ENCODE measurements at regions of chr20 and their contacts with region 1.

Region 1: GRCh38 chr20:38926142-38926933 is at the start of gene FAM83D:
- DNase-seq: peak; percentile 99
- H3K4me3 Mint-ChIP-seq: peak within 1 kb of the TSS; percentile 79
- H3K27ac Mint-ChIP-seq: peak within 1 kb of the TSS; percentile 77
- H3K4me1 Mint-ChIP-seq: peaks cover 32% of the 10 kb centered on the region
- H3K27me3 Mint-ChIP-seq: no peaks in the 10 kb centered on the region
- total RNA-seq, gene FAM83D: 12.9 and 13.7 TPM in 2 replicates

Region 2: GRCh38 chr20:38997622-38998021 is 71.3 kb after region 1 on chr20:
- intact Hi-C with region 1: loop called (anchors 5 kb)
- DNase-seq: peak; percentile 77
- H3K4me3 Mint-ChIP-seq: peak overlapping the region; percentile 17
- H3K27ac Mint-ChIP-seq: peak overlapping the region; percentile 77
- H3K4me1 Mint-ChIP-seq: peaks cover 30% of the 10 kb centered on the region
- H3K27me3 Mint-ChIP-seq: no peaks in the 10 kb centered on the region

Region 3: DNA sequence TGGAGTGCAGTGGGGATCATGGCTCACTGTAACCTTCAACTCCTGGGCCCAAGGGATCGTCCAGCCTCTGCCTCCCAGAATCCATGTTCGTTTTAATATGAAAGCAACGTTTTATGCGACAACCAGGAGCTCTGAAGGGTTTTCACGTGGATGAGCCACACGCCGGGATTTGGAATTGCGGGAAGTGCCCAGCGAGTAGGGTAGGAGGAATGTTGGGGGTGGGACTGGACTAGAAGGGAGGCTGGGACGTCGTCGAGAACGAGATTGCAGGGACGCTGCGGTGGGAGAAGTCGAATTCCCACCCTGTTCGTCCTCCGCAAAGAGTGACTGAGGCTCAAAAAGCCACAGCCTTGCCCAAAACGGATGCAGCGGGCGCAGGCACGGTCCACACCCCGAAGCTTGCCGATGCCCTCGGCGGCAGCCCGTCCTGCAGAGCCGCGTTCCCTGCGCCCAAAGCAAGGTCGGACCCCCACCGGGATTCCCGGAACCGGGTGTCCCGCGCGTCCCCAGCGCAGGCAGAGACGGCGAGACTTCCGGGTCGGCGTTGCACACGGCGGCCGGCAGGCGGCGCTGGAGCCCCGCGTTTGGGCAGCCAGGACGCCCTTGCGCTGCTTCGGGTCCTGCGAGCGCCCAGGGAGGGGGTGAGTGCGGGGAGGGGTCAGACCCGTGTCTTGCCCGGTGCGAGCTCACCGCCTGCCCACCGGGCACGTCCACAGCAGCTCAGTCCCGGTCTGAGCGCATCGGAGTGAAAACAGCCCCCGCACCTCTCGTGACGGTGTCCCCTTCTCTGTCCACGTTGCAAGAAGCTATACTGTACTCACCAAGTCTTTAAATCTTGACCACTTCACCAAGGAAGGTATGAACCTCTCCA is 123.6 kb after region 1 on chr20:
- intact Hi-C with region 1: loop called (anchors 1 kb)
- DNase-seq: peak; percentile 96
- H3K4me3 Mint-ChIP-seq: peak overlapping the region; percentile 88
- H3K27ac Mint-ChIP-seq: peak overlapping the region; percentile 75
- H3K4me1 Mint-ChIP-seq: peaks cover 4% of the 10 kb centered on the region
- H3K27me3 Mint-ChIP-seq: peaks cover 11% of the 10 kb centered on the region

Region 4: GRCh38 chr20:39081255-39081654 is 154.9 kb after region 1 on chr20:
- intact Hi-C with region 1: loop called (anchors 1 kb)
- DNase-seq: peak; percentile 95
- H3K4me3 Mint-ChIP-seq: no peak overlapping the region
- H3K27ac Mint-ChIP-seq: no peak overlapping the region
- H3K4me1 Mint-ChIP-seq: peaks cover 3% of the 10 kb centered on the region
- H3K27me3 Mint-ChIP-seq: peaks cover 25% of the 10 kb centered on the region

Region 5: GRCh38 chr20:39155971-39156370 is 229.6 kb after region 1 on chr20:
- intact Hi-C with region 1: no loop called
- DNase-seq: no peak
- H3K4me3 Mint-ChIP-seq: no peak overlapping the region
- H3K27ac Mint-ChIP-seq: no peak overlapping the region
- H3K4me1 Mint-ChIP-seq: no peaks in the 10 kb centered on the region
- H3K27me3 Mint-ChIP-seq: peaks cover 9% of the 10 kb centered on the region